ENCODE measurements at regions of chr19 and their contacts with region 1.

Region 1: GRCh38 chr19:7355151-7355820 is 6.5 kb downstream of the ARHGEF18 start:
- DNase-seq: no peak
- ATAC-seq: no peak
- H3K4me3 ChIP-seq: no peak overlapping the region
- H3K4me3 Mint-ChIP-seq: peak overlapping the region; percentile 76
- H3K27ac ChIP-seq: no peak overlapping the region
- H3K27ac Mint-ChIP-seq: peak overlapping the region; percentile 95
- H3K4me1 ChIP-seq: peaks cover 70% of the 10 kb centered on the region
- H3K4me1 Mint-ChIP-seq: peaks cover 80% of the 10 kb centered on the region
- H3K27me3 ChIP-seq: no peaks in the 10 kb centered on the region
- H3K27me3 Mint-ChIP-seq: no peaks in the 10 kb centered on the region
- CTCF ChIP-seq: no peak

Region 2: GRCh38 chr19:7366701-7367420 is 11.6 kb after region 1 on chr19:
- CTCF ChIA-PET with region 1: interaction called, 14 read pairs
- POLR2A ChIA-PET with region 1: interaction called, 11 read pairs
- intact Hi-C with region 1: no loop called
- DNase-seq: peak in 2 of 9 experiments; percentile 36 to 55
- ATAC-seq: no peak
- H3K4me3 ChIP-seq: no peak overlapping the region
- H3K4me3 Mint-ChIP-seq: no peak overlapping the region
- H3K27ac ChIP-seq: no peak overlapping the region
- H3K27ac Mint-ChIP-seq: peak overlapping the region; percentile 32
- H3K4me1 ChIP-seq: peaks cover 16% of the 10 kb centered on the region
- H3K4me1 Mint-ChIP-seq: peaks cover 36% of the 10 kb centered on the region
- H3K27me3 ChIP-seq: no peaks in the 10 kb centered on the region
- H3K27me3 Mint-ChIP-seq: no peaks in the 10 kb centered on the region
- CTCF ChIP-seq: peak; percentile 29

Region 3: DNA sequence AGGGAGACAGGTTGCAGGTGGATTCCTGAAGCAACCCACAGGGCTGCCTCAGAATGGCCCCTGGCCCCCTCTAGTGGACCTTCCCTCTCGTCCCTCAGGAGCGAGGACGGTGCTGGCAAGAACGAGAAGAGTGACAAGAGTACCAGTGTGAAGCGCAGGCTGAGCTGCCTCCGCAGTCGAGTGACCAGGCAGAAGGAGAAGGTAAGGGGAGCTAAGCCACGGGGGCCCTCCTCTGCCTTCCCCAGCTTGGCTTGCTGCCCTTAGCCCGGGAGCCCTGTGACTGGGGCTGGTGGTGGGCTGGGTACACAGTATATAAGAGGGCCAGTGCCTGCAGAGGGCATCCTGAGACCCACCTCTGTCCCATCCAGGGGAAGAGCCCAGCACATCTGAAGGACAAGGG is 27.4 kb after region 1 on chr19:
- CTCF ChIA-PET with region 1: interaction called, 45 read pairs
- POLR2A ChIA-PET with region 1: no interaction called
- intact Hi-C with region 1: loop called (anchors 1 kb)
- DNase-seq: no peak
- ATAC-seq: no peak
- H3K4me3 ChIP-seq: no peak overlapping the region
- H3K4me3 Mint-ChIP-seq: no peak overlapping the region
- H3K27ac ChIP-seq: no peak overlapping the region
- H3K27ac Mint-ChIP-seq: no peak overlapping the region
- H3K4me1 ChIP-seq: no peaks in the 10 kb centered on the region
- H3K4me1 Mint-ChIP-seq: peaks cover 19% of the 10 kb centered on the region
- H3K27me3 ChIP-seq: no peaks in the 10 kb centered on the region
- H3K27me3 Mint-ChIP-seq: no peaks in the 10 kb centered on the region
- CTCF ChIP-seq: no peak

Measured in CD8-positive, alpha-beta T cell (primary cell).